ENCODE measurements at regions of chrX and their contacts with region 1.

Region 1: GRCh38 chrX:41858161-41858775 is 65.1 kb downstream of the CASK start:
- DNase-seq: no peak
- H3K4me3 ChIP-seq: no peak overlapping the region
- CTCF ChIP-seq: no peak

Region 2: GRCh38 chrX:41802958-41803357 is 55.3 kb before region 1 on chrX:
- in situ Hi-C with region 1: no loop called
- DNase-seq: no peak
- H3K4me3 ChIP-seq: no peak overlapping the region
- CTCF ChIP-seq: no peak

Region 3: DNA sequence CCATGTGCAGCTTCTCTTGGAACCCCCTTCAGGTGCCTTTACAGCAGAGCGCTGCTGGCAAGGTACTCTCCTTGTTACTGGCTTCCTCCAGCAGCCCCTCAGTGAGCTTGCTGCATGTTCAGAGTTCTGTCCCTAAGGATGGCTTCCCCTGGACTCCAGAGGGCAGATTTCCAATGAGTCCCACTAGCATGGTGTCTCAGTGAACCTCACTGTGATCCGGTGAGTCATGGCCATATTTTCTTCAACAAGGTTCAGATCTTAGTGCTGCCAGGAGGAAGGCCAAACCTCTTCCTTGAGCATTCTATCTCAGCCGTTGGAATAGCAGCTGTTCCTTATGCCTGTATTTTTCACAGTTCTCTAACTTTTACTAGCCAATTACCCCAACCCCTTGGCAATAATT is 33.7 kb before region 1 on chrX:
- in situ Hi-C with region 1: loop called (anchors 5 kb)
- DNase-seq: peak; percentile 28
- H3K4me3 ChIP-seq: no peak overlapping the region
- CTCF ChIP-seq: peak; percentile 6

Region 4: DNA sequence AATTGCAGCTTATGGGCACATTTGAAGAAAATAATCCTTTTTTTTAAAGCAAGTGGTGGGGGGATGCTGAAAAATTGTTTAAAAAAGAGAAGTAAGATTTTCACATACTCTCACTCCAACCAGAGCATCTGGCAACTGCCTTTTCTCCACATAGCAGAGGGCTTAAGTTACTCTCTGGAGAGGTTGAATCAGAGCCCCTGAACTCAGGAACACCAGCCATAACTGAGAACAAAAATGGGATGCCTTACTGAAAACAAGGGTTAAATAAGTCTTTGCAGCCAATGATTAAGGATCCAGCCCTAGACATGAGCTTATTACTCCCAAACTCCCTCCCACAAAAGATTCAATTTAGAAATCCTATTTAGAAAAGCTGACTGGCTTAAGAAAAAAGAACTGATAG is 37.6 kb after region 1 on chrX:
- in situ Hi-C with region 1: no loop called
- DNase-seq: no peak
- H3K4me3 ChIP-seq: no peak overlapping the region
- CTCF ChIP-seq: no peak

Measured in astrocyte of the cerebellum (primary cell).